ENCODE measurements at regions of chr5 and their contacts with region 1.

Region 1: DNA sequence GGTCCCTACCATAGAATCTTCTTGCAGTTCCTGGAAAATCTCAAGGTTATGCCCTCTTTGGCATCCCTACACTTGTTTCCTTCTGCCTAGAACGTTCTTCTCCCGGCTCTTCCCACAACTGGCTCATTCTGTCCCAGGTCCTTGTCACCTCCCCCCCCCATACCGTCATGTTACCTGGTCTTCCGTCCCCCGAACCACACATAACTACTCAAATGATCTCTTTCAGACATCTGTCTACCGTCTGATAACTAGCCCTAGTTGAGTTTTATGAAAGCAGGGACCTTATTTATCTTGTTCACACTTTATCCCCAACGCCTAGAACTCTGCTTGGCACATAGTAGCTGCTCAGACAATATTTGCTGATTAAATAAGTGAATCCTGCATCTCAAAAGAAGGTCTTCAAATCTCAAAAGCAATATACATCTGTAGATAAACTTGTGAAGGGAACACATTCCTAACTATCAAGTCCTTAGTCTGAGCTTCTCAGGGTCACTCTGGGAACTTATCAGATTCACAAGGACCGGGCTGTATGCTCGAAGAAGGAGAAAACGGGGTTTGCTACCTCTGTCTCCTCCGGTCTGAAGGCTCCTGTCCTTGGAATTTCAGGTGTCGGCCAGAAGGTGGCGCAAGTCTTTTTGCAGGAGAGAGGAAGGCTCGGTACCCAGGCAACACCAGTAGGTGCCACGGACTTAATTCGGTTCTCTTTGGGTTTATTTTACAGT is 30.0 kb downstream of the LCP2 start:
- DNase-seq: peak; percentile 80 to 83 (median 82)
- H3K4me3 ChIP-seq: peak overlapping the region in 1 of 2 donors; percentile 33
- H3K4me3 Mint-ChIP-seq: peak overlapping the region; percentile 41 to 86 (median 75)
- H3K27ac ChIP-seq: peak overlapping the region; percentile 66
- H3K27ac Mint-ChIP-seq: peak overlapping the region; percentile 90 to 100 (median 95)
- H3K4me1 ChIP-seq: peaks cover 94% of the 10 kb centered on the region
- H3K4me1 Mint-ChIP-seq: peaks cover 67 to 92% (median 81%) of the 10 kb centered on the region in 4 donors
- H3K27me3 ChIP-seq: no peaks in the 10 kb centered on the region
- H3K27me3 Mint-ChIP-seq: no peaks in the 10 kb centered on the region

Region 2: DNA sequence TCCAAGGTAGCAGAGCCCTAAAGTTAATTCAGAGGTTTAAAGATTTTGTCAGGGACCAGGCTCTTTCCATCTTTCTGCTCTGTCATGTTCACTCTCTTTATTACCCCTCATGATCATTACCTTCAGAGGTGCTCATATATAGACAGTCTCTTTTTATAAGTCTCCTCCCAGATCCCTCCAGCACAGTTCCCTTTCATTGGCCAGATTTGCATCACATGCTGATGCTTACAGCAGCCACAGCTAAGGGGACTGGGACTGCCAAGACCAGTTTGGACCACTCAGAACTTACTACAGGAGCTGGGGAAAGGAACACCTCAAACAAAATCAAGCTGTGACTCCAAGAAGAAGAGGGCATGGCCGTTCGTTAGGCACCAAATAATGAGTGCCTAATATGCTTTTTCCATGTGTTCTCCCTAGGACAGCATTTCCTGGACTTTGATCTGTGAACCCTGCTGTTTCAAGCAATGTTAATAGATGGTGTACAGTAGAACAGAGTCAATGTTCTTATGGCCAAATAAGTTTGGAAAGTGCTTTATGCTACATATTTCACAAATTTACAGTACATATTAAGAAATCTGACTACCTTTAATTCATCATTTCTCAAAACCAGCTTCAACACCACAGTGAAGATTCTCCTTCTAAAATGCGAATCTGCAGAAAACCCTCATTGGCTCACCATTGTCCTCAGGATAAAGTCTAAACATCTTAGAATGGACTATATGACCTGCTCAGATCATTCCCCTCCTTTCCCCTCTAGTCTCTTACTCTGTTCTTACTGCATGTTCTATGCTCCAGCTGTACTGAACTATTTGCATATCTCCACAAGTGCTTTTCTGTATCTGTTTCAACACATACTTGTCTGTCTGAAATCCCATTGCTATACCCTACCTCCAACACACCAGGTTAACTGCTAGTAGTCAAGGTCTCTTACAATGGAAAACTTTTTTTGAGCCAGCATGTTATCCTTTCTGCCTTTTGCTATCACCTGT is 31.4 kb before region 1 on chr5:
- CTCF ChIA-PET with region 1: interaction called, 14 read pairs
- POLR2A ChIA-PET with region 1: interaction called, 3 read pairs
- intact Hi-C with region 1: no loop called
- DNase-seq: no peak
- H3K4me3 ChIP-seq: no peak overlapping the region
- H3K4me3 Mint-ChIP-seq: peak overlapping the region in 1 of 8 donors; percentile 13
- H3K27ac ChIP-seq: no peak overlapping the region
- H3K27ac Mint-ChIP-seq: peak overlapping the region in 4 of 7 donors; percentile 25 to 77 (median 51)
- H3K4me1 ChIP-seq: no peaks in the 10 kb centered on the region
- H3K4me1 Mint-ChIP-seq: peaks cover 0 to 7% (median 4%) of the 10 kb centered on the region in 4 donors
- H3K27me3 ChIP-seq: no peaks in the 10 kb centered on the region
- H3K27me3 Mint-ChIP-seq: no peaks in the 10 kb centered on the region

Region 3: GRCh38 chr5:170253844-170254455 is 13.6 kb before region 1 on chr5:
- CTCF ChIA-PET with region 1: interaction called, 34 read pairs
- POLR2A ChIA-PET with region 1: interaction called, 34 read pairs
- intact Hi-C with region 1: loop called (anchors 1 kb)
- DNase-seq: peak; percentile 72 to 93 (median 79)
- H3K4me3 ChIP-seq: no peak overlapping the region
- H3K4me3 Mint-ChIP-seq: peak overlapping the region in 7 of 8 donors; percentile 2 to 78 (median 11)
- H3K27ac ChIP-seq: peak overlapping the region; percentile 60
- H3K27ac Mint-ChIP-seq: peak overlapping the region; percentile 82 to 97 (median 92)
- H3K4me1 ChIP-seq: peaks cover 51% of the 10 kb centered on the region
- H3K4me1 Mint-ChIP-seq: peaks cover 27 to 59% (median 42%) of the 10 kb centered on the region in 4 donors
- H3K27me3 ChIP-seq: no peaks in the 10 kb centered on the region
- H3K27me3 Mint-ChIP-seq: no peaks in the 10 kb centered on the region

Region 4: DNA sequence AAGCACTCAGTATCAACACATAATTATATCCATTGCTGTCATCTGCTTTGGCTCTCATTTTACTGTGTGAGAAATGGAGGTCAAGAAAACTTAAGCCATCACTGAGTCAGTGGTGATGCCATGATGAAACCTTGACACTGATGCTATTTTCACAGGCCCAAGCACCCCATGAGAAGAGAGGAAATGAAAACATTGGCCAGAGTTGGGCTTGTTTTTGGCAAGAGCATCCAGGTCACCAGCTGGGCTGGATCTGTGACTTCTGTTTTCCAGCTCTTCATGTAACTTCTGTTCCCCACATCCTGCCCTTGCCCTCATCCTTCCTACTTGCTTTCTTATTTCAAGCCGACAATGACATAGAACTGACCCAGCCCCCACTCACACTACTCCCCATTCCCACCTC is 19.9 kb after region 1 on chr5:
- CTCF ChIA-PET with region 1: interaction called, 384 read pairs
- POLR2A ChIA-PET with region 1: interaction called, 1,265 read pairs
- intact Hi-C with region 1: no loop called
- DNase-seq: no peak
- H3K4me3 ChIP-seq: no peak overlapping the region
- H3K4me3 Mint-ChIP-seq: peak overlapping the region in 7 of 8 donors; percentile 22 to 99 (median 73)
- H3K27ac ChIP-seq: peak overlapping the region; percentile 49
- H3K27ac Mint-ChIP-seq: peak overlapping the region; percentile 80 to 100 (median 90)
- H3K4me1 ChIP-seq: peaks cover 99% of the 10 kb centered on the region
- H3K4me1 Mint-ChIP-seq: peaks cover 91 to 100% (median 96%) of the 10 kb centered on the region in 4 donors
- H3K27me3 ChIP-seq: no peaks in the 10 kb centered on the region
- H3K27me3 Mint-ChIP-seq: no peaks in the 10 kb centered on the region

Region 5: GRCh38 chr5:170312666-170313065 is 45.1 kb after region 1 on chr5:
- CTCF ChIA-PET with region 1: interaction called, 11 read pairs
- POLR2A ChIA-PET with region 1: interaction called, 1,265 read pairs
- intact Hi-C with region 1: no loop called
- DNase-seq: peak in 2 of 5 donors; percentile 39 to 93
- H3K4me3 ChIP-seq: peak overlapping the region; percentile 3 to 42
- H3K4me3 Mint-ChIP-seq: peak overlapping the region; percentile 63 to 91 (median 76)
- H3K27ac ChIP-seq: peak overlapping the region; percentile 59
- H3K27ac Mint-ChIP-seq: peak overlapping the region; percentile 84 to 97 (median 96)
- H3K4me1 ChIP-seq: peaks cover 48% of the 10 kb centered on the region
- H3K4me1 Mint-ChIP-seq: peaks cover 41 to 69% (median 49%) of the 10 kb centered on the region in 4 donors
- H3K27me3 ChIP-seq: no peaks in the 10 kb centered on the region
- H3K27me3 Mint-ChIP-seq: no peaks in the 10 kb centered on the region

Region 6: GRCh38 chr5:170333161-170333910 is 65.7 kb after region 1 on chr5:
- CTCF ChIA-PET with region 1: interaction called, 200 read pairs
- POLR2A ChIA-PET with region 1: interaction called, 255 read pairs
- intact Hi-C with region 1: loop called (anchors 1 kb)
- DNase-seq: peak; percentile 55 to 88 (median 61)
- H3K4me3 ChIP-seq: peak overlapping the region in 1 of 2 donors; percentile 39
- H3K4me3 Mint-ChIP-seq: peak overlapping the region in 6 of 8 donors; percentile 71 to 90 (median 84)
- H3K27ac ChIP-seq: peak overlapping the region; percentile 94
- H3K27ac Mint-ChIP-seq: no peak overlapping the region
- H3K4me1 ChIP-seq: peaks cover 99% of the 10 kb centered on the region
- H3K4me1 Mint-ChIP-seq: peaks cover 0 to 59% (median 30%) of the 10 kb centered on the region in 4 donors
- H3K27me3 ChIP-seq: no peaks in the 10 kb centered on the region
- H3K27me3 Mint-ChIP-seq: peaks cover 0 to 2% of the 10 kb centered on the region in 2 donors

Measured in CD4-positive, alpha-beta memory T cell (primary cell).